ENCODE measurements at regions of chr1 and their contacts with region 1.

Region 1: DNA sequence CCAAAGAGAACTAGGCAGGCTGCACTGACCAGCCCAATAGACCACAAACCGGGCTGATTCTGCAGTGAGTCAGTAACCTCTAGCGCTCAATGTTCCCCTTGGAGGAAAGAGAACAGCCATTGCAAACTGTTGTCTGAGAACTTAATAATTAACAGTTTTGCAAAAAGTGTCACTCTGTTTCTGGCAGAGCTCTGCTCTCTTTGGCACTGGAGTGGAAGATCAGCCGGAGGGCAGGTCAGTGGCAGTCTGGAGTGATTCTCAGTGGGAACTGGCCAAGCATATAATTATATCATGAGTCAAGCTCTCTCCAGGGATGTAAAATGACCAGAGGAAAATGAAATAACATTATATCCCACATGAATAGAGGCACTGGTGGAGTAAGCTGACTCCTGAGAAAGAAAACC is 238.3 kb downstream of the HLX start:
- DNase-seq: peak; percentile 96

Region 2: GRCh38 chr1:221316491-221317056 is 199.0 kb after region 1 on chr1:
- in situ Hi-C with region 1: no loop called
- DNase-seq: no peak

Region 3: GRCh38 chr1:221435504-221435904 is 318.0 kb after region 1 on chr1:
- in situ Hi-C with region 1: loop called (anchors 10 kb)
- DNase-seq: peak; percentile 57

Measured in Caki2 (cell line).